ENCODE measurements at regions of chr11 and their contacts with region 1.

Region 1: GRCh38 chr11:35662649-35663407 is at the start of gene TRIM44:
- DNase-seq: peak; percentile 92
- ATAC-seq: peak; percentile 86
- H3K4me3 Mint-ChIP-seq: peak within 1 kb of the TSS; percentile 83
- H3K27ac Mint-ChIP-seq: peak within 1 kb of the TSS; percentile 97
- H3K4me1 Mint-ChIP-seq: peaks cover 41% of the 10 kb centered on the region
- H3K27me3 Mint-ChIP-seq: peaks cover under 1% of the 10 kb centered on the region
- total RNA-seq, gene TRIM44: 38.1 to 39.9 TPM

Region 2: DNA sequence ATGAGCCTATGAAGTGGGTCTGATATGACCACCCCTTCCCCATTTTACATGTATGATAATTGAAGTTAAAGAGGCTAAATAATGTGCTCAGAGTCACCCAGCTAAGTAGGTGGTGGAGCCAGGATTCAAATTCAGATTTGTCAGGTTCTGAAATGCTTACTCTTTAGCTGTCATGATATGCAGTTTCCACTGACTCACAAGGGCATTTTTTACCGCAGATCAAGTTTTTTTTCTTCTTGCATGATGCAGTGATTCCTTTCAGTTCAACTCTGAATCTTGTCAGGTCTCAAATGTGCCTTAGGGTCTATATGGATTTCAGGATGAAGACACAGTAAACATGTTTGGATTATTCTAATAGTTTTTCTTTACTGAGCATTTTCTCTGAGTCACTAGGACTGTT is 12.8 kb before region 1 on chr11:
- CTCF ChIA-PET with region 1: interaction called, 4 read pairs
- POLR2A ChIA-PET with region 1: no interaction called
- intact Hi-C with region 1: loop called in 1 of 2 experiments (anchors 1 kb)
- DNase-seq: peak; percentile 24
- ATAC-seq: peak; percentile 93
- H3K4me3 Mint-ChIP-seq: no peak overlapping the region
- H3K27ac Mint-ChIP-seq: no peak overlapping the region
- H3K4me1 Mint-ChIP-seq: peaks cover 8% of the 10 kb centered on the region
- H3K27me3 Mint-ChIP-seq: peaks cover 47% of the 10 kb centered on the region

Region 3: DNA sequence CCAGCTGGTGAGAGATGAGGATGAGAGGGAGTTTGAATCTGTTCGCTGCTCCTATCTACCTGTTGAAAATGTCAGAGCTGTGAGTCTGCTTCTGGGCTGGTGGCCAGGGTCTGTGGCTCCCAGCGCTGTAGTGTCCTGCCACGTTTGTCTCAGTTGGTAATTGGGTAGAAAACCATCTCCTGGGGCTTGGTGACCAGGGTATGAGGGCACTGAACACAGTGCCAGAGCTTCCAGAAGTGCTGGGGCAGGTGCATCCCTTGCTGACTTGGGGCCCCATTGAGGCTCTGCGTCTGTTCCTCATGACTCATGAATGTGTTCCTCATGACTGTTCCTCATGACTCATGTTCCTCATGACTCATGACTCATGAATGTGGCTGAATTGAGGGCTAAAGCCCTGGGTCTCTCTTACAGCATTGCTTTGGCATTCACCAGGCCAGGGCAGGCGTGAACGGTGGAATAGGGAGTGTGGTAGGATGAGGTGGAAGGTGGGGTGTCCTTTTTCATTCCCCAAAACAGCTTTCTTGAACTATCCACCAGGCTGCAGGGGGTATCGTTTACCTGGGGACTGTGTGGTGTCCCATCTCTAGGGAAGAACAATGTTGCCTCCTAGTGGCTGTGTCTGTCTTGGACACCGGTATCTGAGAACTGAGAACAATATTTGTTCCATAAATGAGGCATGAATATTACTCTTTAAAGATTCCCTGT is 486.9 kb after region 1 on chr11:
- CTCF ChIA-PET with region 1: interaction called, 3 read pairs
- POLR2A ChIA-PET with region 1: no interaction called
- intact Hi-C with region 1: loop called in 1 of 2 experiments (anchors 1 kb)
- DNase-seq: peak; percentile 72
- ATAC-seq: peak; percentile 98
- H3K4me3 Mint-ChIP-seq: no peak overlapping the region
- H3K27ac Mint-ChIP-seq: no peak overlapping the region
- H3K4me1 Mint-ChIP-seq: peaks cover 16% of the 10 kb centered on the region
- H3K27me3 Mint-ChIP-seq: peaks cover 13% of the 10 kb centered on the region

Region 4: DNA sequence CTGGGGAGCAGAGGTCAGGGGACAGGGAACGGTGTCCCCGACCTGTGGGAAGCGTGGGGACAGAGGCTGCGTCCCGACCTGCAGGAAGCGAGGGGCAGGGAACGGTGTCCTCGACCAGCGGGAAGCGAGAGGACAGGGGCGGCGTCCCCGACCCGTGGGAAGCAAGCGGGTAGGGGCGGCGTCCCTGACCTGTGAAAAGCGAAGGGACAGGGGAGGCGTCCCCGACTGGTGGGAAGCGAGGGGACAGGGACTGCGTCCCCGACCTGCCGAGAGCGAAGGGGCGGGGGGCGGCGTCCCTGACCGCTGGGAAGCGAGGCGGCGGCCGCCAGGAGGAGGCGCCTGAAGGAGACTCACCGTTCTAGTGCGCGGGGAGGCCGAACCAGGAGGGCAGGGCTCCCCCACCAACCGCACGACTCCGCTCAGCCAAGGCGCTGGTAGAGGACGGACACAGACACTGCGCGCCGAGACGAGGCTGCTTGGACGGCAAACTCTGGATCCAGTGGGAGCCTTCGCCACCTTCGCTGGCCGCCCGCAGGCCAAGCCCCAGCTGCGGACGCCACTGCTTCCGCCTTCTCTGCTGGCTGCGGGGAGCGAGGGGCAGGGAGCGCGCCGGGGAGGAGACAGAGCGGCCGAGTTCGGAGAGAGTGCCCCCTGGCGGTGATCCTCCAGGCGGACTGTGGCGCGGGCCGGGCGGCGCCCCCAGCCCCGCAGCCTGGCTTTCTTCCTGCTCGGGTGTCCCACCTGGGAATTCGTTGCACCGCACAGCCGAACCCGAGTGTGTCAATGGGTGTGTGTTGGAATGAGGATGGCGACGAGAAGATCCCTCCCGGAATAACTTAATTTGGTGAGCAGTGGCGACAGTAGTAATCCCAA is 847.1 kb after region 1 on chr11 and contains the start of gene TRAF6:
- CTCF ChIA-PET with region 1: no interaction called
- POLR2A ChIA-PET with region 1: no interaction called
- intact Hi-C with region 1: loop called (anchors 2 to 5 kb)
- DNase-seq: peak; percentile 95
- ATAC-seq: peak; percentile 95
- H3K4me3 Mint-ChIP-seq: peak within 1 kb of the TSS; percentile 95
- H3K27ac Mint-ChIP-seq: peak within 1 kb of the TSS; percentile 88
- H3K4me1 Mint-ChIP-seq: peaks cover 32% of the 10 kb centered on the region
- H3K27me3 Mint-ChIP-seq: peaks cover 5% of the 10 kb centered on the region
- total RNA-seq, gene TRAF6: 11.1 to 12.5 TPM

Region 5: DNA sequence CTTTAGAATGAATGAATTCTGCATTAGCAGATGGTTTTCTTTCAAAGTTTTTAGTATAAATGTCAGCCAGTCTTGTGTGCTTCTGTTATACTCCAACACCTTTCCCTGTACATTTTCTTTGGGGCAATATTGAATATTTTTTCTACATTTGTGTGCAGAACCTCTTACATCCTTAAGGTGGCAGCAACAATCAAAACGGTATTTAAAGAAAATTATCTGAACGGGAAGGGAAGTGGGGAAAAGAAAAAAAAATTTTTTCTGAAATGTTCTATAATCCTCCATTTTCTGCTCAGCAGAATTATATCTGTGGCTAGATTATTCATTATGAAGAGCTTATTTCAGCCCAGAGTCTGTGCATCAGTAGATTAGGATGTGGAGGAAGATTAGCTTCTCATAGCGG is 1282.6 kb after region 1 on chr11:
- CTCF ChIA-PET with region 1: no interaction called
- POLR2A ChIA-PET with region 1: no interaction called
- intact Hi-C with region 1: no loop called
- DNase-seq: no peak
- ATAC-seq: no peak
- H3K4me3 Mint-ChIP-seq: no peak overlapping the region
- H3K27ac Mint-ChIP-seq: no peak overlapping the region
- H3K4me1 Mint-ChIP-seq: no peaks in the 10 kb centered on the region
- H3K27me3 Mint-ChIP-seq: no peaks in the 10 kb centered on the region

Measured in activated CD4-positive, alpha-beta T cell treated with anti-CD3 and anti-CD28 coated beads for 36 hours (primary cell).